ENCODE measurements at regions of chr5 and their contacts with region 1.

Region 1: DNA sequence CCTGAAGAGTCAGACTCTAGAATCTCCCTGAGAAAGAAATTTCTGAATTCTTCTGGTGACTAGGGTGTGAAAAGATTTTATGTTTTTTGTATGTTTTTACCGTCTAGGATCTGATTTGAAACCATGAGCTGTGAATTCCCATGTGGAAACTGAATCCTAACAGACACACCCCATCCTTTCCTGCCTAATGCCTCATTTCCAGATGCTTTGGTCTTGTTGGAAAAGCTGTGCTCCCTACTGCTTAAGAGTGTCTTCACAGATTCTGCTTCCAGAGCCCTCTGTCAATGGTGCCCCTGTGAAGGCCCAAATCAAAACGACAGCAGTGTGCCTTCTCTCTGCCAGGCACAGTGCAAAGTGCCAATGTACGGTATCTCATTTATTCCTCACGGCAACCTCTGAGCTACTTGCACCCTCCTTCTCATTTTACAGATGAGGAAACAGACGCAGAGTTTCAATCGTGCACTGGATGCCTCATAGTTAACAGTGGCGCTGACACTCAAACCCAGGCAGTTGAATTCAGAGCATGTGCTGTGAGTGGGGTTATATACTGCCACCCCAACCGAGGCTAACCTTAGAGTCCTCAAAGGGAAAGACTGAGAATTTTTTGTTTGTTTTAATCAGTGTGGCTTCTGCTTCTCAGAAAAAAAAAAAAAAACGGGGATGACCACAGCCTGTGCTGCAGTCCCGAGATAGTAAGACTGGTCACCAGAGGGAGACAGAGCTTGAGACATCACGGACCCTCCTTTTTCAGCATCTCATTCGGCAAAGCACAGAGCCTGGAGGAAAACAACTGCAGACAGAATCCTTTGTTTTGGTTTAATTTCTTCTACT is 188.4 kb downstream of the SNCAIP start:
- DNase-seq: peak in 2 of 5 donors; percentile 27 to 33
- ATAC-seq: peak; percentile 35 to 81 (median 70)
- H3K4me3 ChIP-seq: peak overlapping the region in 2 of 12 donors; percentile 19
- H3K27ac ChIP-seq: peak overlapping the region in 6 of 12 donors; percentile 0 to 63 (median 42)
- H3K4me1 ChIP-seq: peaks cover 0 to 12% (median 0%) of the 10 kb centered on the region in 12 donors
- H3K27me3 ChIP-seq: no peaks in the 10 kb centered on the region
- CTCF ChIP-seq: peak; percentile 23 to 62 (median 42)
- POLR2A ChIP-seq: no peak

Region 2: GRCh38 chr5:122532035-122532434 is 31.6 kb after region 1 on chr5:
- intact Hi-C with region 1: no loop called
- DNase-seq: no peak
- ATAC-seq: no peak
- H3K4me3 ChIP-seq: no peak overlapping the region
- H3K27ac ChIP-seq: no peak overlapping the region
- H3K4me1 ChIP-seq: peaks cover 0 to 5% (median 0%) of the 10 kb centered on the region in 12 donors
- H3K27me3 ChIP-seq: peaks cover 0 to 36% (median 2%) of the 10 kb centered on the region in 9 donors
- CTCF ChIP-seq: no peak
- POLR2A ChIP-seq: no peak

Region 3: GRCh38 chr5:123371575-123372179 is 871.2 kb after region 1 on chr5:
- intact Hi-C with region 1: loop called in 3 of 10 experiments (anchors 5 to 10 kb)
- DNase-seq: peak in 4 of 5 donors; percentile 15 to 57 (median 44)
- ATAC-seq: no peak
- H3K4me3 ChIP-seq: no peak overlapping the region
- H3K27ac ChIP-seq: no peak overlapping the region
- H3K4me1 ChIP-seq: no peaks in the 10 kb centered on the region
- H3K27me3 ChIP-seq: no peaks in the 10 kb centered on the region
- CTCF ChIP-seq: peak; percentile 20 to 59 (median 44)
- POLR2A ChIP-seq: no peak

Region 4: DNA sequence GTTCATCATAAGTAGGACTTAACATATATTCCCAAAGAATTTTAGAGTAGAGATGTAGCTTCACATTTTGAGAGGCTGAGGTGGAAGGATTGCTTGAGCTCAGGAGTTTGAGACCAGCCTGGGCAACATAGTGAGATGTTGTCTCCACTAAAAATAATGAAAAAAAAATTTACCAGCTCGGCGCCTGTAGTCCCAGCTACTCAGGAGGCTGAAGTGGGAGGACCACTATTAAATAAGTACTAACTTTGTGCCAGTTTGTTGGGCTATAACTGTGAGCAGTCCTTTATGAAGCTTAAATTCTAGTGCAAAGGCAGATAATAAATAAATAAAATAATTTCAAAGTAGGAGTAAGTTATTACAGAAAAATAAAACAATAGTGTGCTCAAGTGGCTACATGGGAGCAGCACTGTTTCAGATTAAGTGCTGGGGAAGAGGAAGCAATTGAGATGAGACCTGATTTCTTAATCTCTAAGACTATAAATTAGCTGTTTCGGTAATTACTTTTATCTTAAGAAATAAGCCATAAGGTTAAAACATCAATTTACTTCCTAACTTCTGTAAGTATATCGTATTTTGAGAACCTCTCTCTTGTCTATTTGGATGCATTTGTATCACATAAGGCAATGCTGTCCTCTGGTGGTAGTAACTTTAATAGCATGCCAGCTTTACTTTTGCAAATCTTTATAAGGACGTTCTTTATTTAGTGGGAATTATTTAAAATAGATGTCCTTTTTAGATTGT is 1110.4 kb after region 1 on chr5:
- intact Hi-C with region 1: loop called in 2 of 10 experiments (anchors 5 to 10 kb)
- DNase-seq: no peak
- ATAC-seq: peak in 3 of 4 donors; percentile 50 to 70 (median 54)
- H3K4me3 ChIP-seq: no peak overlapping the region
- H3K27ac ChIP-seq: no peak overlapping the region
- H3K4me1 ChIP-seq: peaks cover 0 to 7% (median 0%) of the 10 kb centered on the region in 12 donors
- H3K27me3 ChIP-seq: no peaks in the 10 kb centered on the region
- CTCF ChIP-seq: peak; percentile 89 to 99 (median 96)
- POLR2A ChIP-seq: no peak